ENCODE measurements at regions of chr6 and their contacts with region 1.

Region 1: GRCh38 chr6:159789377-159790148 is at the start of gene TCP1:
- DNase-seq: peak; percentile 99 to 100 (median 100)
- ATAC-seq: peak; percentile 92 to 95 (median 94)
- H3K4me3 ChIP-seq: peak within 1 kb of the TSS; percentile 80 to 100 (median 93)
- H3K27ac ChIP-seq: peak within 1 kb of the TSS; percentile 73 to 99 (median 96)
- H3K4me1 ChIP-seq: peaks cover 5 to 50% (median 35%) of the 10 kb centered on the region in 12 donors
- H3K27me3 ChIP-seq: no peaks in the 10 kb centered on the region
- CTCF ChIP-seq: no peak
- POLR2A ChIP-seq: peak in 1 of 2 donors; percentile 89
- total RNA-seq, gene TCP1: 107 to 184 (median 142) TPM

Region 2: GRCh38 chr6:159726918-159727716 is 62.4 kb before region 1 on chr6 and contains the start of gene WTAP:
- intact Hi-C with region 1: loop called in 8 of 10 experiments (anchors 1 to 5 kb)
- DNase-seq: peak; percentile 95 to 97 (median 97)
- ATAC-seq: peak; percentile 96 to 98 (median 97)
- H3K4me3 ChIP-seq: peak within 1 kb of the TSS; percentile 64 to 98 (median 92)
- H3K27ac ChIP-seq: peak within 1 kb of the TSS; percentile 95 to 100 (median 99)
- H3K4me1 ChIP-seq: peaks cover 3 to 52% (median 42%) of the 10 kb centered on the region in 12 donors
- H3K27me3 ChIP-seq: no peaks in the 10 kb centered on the region
- CTCF ChIP-seq: no peak
- POLR2A ChIP-seq: peak in 1 of 2 donors; percentile 72
- total RNA-seq, gene WTAP: 39.0 to 70.2 (median 48.2) TPM

Region 3: GRCh38 chr6:159899994-159900745 is 110.6 kb after region 1 on chr6:
- intact Hi-C with region 1: no loop called
- DNase-seq: no peak
- ATAC-seq: no peak
- H3K4me3 ChIP-seq: no peak overlapping the region
- H3K27ac ChIP-seq: no peak overlapping the region
- H3K4me1 ChIP-seq: no peaks in the 10 kb centered on the region
- H3K27me3 ChIP-seq: no peaks in the 10 kb centered on the region
- CTCF ChIP-seq: no peak
- POLR2A ChIP-seq: no peak

Measured in heart left ventricle (tissue), 16 donors.